ENCODE measurements at regions of chr1 and their contacts with region 1.

Region 1: GRCh38 chr1:201254625-201255506 is 28.4 kb upstream of the PKP1 start:
- DNase-seq: peak; percentile 91
- H3K4me3 Mint-ChIP-seq: no peak overlapping the region
- H3K27ac Mint-ChIP-seq: no peak overlapping the region
- H3K4me1 Mint-ChIP-seq: no peaks in the 10 kb centered on the region
- H3K27me3 Mint-ChIP-seq: peaks cover 24% of the 10 kb centered on the region
- CTCF ChIP-seq: peak; percentile 99

Region 2: GRCh38 chr1:201361652-201362504 is 107.0 kb after region 1 on chr1:
- CTCF ChIA-PET with region 1: interaction called, 24 read pairs
- intact Hi-C with region 1: loop called (anchors 1 kb)
- DNase-seq: peak; percentile 75
- H3K4me3 Mint-ChIP-seq: no peak overlapping the region
- H3K27ac Mint-ChIP-seq: no peak overlapping the region
- H3K4me1 Mint-ChIP-seq: no peaks in the 10 kb centered on the region
- H3K27me3 Mint-ChIP-seq: peaks cover 87% of the 10 kb centered on the region
- CTCF ChIP-seq: peak; percentile 95